Gastrocnemius medialis (tissue), 4 donors: ENCODE measurements at regions of chr1 and their contacts with region 1.

Region 1: DNA sequence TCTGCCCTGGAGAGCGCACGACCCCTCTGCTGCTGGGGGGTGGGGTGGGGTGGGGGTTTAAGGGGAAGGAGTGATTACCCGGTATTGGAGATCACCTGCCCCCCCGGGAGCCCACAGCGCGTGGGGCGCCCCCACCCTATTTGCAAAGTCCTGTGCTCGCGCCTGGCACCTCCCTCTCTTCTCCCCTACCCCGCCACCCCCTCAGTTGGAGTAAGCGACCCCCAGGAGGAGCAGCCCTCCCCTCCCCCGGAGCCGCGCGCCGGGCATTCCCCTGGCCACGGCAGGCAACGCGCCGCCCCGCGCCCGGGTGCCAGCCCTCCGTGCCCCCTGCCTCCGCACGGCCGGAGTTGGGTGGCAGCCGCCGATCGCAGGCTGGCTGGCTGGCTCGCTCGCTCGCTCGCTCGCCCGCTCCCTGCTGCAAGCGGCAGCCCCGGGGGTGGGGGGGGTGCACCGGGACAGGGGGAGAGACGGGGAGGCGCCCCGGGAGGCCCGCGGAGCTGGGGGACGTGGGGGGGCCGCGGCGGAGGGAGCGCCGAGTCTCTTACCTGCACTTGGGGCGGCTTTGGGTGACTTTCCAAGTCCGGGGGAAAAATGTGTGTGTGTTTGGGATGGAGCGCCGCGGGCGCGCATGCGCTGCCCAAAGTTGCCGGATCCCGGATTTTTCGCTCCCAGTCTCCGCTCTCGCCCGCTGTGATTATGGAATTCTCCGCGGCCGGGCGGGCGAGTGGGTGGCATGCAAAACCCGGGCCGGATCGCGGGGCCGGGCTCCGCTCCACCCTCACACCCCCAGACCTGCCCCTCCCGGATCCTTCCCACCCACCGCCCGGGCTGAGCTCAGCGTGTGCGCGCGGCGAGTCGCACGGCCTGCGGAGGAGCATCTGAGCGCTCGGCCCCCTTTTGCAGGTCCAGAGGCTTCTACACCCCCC is at the start of gene CASZ1:
- DNase-seq: peak; percentile 71 to 84
- ATAC-seq: peak; percentile 44 to 51
- H3K4me3 ChIP-seq: peak within 1 kb of the TSS; percentile 80 to 98 (median 90)
- H3K27ac ChIP-seq: peak within 1 kb of the TSS; percentile 98 to 100 (median 99)
- H3K4me1 ChIP-seq: peaks cover 17 to 18% of the 10 kb centered on the region in 2 donors
- H3K27me3 ChIP-seq: no peaks in the 10 kb centered on the region
- CTCF ChIP-seq: peak in 2 of 5 experiments; percentile 36 to 56
- POLR2A ChIP-seq: peak; percentile 85
- total RNA-seq, gene CASZ1: 19.1 to 121 (median 80.6) TPM

Region 2: DNA sequence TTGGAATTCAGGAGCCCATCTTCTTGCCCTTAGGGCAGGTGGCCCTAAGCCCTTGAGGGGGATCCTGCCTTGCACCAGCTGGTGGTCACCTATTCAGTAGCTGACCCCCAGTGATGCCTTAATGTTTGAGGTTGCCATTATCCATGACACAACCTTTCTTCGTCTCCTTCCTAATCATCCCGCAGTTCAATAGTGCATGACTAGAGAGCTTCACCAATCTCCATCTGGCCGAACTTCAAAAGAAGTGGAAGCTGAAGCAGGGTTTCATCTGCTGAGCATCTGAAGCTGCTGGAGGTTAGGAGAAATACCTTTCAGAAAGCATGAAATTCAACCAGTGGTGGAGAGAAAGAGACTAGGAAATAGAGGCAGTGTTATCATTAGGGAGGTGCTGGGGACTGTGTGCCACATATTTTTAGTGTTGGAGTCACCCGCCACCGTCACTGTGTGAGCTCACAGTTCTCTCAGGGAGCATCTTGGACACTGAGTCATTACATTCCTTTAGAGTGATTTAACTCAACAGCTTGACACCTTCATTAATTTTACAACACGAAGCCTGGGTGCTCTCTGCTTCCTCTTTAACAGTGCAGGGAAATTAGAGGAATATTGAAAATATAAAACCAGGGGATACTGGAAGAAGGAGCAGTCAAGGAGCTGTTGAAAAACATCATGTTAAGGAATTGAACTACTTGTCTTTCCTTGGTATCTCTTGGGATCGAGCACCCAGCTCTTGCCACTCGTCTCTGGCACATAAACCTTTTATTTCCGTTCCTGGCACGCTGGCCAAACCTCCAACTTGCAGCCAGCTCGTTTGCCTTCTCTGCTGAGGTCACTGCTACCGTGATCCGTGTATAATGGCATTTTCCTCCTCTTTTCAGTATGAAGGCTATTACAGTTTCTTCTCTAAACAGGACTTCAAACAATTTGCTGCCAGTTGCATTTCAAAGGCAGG is 267.9 kb before region 1 on chr1:
- in situ Hi-C with region 1: no loop called
- intact Hi-C with region 1: loop called (anchors 5 kb)
- DNase-seq: peak; percentile 50 to 70
- ATAC-seq: peak; percentile 97 to 98
- H3K4me3 ChIP-seq: peak overlapping the region in 1 of 4 donors; percentile 4
- H3K27ac ChIP-seq: peak overlapping the region; percentile 14 to 75 (median 66)
- H3K4me1 ChIP-seq: peaks cover 24 to 38% of the 10 kb centered on the region in 2 donors
- H3K27me3 ChIP-seq: no peaks in the 10 kb centered on the region
- CTCF ChIP-seq: no peak
- POLR2A ChIP-seq: no peak

Region 3: GRCh38 chr1:10679496-10680220 is 116.6 kb before region 1 on chr1:
- in situ Hi-C with region 1: loop called in 3 of 4 experiments (anchors 10 to 25 kb)
- intact Hi-C with region 1: no loop called
- DNase-seq: no peak
- ATAC-seq: no peak
- H3K4me3 ChIP-seq: no peak overlapping the region
- H3K27ac ChIP-seq: peak overlapping the region in 3 of 4 donors; percentile 22 to 81 (median 37)
- H3K4me1 ChIP-seq: peaks cover 78 to 81% of the 10 kb centered on the region in 2 donors
- H3K27me3 ChIP-seq: no peaks in the 10 kb centered on the region
- CTCF ChIP-seq: no peak
- POLR2A ChIP-seq: no peak

Region 4: GRCh38 chr1:10724948-10725847 is 71.1 kb before region 1 on chr1:
- in situ Hi-C with region 1: no loop called
- intact Hi-C with region 1: loop called (anchors 2 kb)
- DNase-seq: peak; percentile 88 to 96
- ATAC-seq: peak; percentile 40 to 43
- H3K4me3 ChIP-seq: peak overlapping the region in 1 of 4 donors; percentile 3
- H3K27ac ChIP-seq: peak overlapping the region; percentile 93 to 100 (median 98)
- H3K4me1 ChIP-seq: peaks cover 59 to 81% of the 10 kb centered on the region in 2 donors
- H3K27me3 ChIP-seq: no peaks in the 10 kb centered on the region
- CTCF ChIP-seq: no peak
- POLR2A ChIP-seq: peak; percentile 24 to 25

Region 5: GRCh38 chr1:10856863-10857598 is 60.7 kb after region 1 on chr1:
- in situ Hi-C with region 1: loop called in 1 of 4 experiments (anchors 10 kb)
- intact Hi-C with region 1: loop called (anchors 1 kb)
- DNase-seq: peak; percentile 50 to 72
- ATAC-seq: peak; percentile 54 to 64
- H3K4me3 ChIP-seq: peak overlapping the region; percentile 2 to 35 (median 16)
- H3K27ac ChIP-seq: peak overlapping the region; percentile 91 to 99 (median 93)
- H3K4me1 ChIP-seq: peaks cover 55 to 57% of the 10 kb centered on the region in 2 donors
- H3K27me3 ChIP-seq: no peaks in the 10 kb centered on the region
- CTCF ChIP-seq: no peak
- POLR2A ChIP-seq: peak; percentile 45 to 49

Region 6: DNA sequence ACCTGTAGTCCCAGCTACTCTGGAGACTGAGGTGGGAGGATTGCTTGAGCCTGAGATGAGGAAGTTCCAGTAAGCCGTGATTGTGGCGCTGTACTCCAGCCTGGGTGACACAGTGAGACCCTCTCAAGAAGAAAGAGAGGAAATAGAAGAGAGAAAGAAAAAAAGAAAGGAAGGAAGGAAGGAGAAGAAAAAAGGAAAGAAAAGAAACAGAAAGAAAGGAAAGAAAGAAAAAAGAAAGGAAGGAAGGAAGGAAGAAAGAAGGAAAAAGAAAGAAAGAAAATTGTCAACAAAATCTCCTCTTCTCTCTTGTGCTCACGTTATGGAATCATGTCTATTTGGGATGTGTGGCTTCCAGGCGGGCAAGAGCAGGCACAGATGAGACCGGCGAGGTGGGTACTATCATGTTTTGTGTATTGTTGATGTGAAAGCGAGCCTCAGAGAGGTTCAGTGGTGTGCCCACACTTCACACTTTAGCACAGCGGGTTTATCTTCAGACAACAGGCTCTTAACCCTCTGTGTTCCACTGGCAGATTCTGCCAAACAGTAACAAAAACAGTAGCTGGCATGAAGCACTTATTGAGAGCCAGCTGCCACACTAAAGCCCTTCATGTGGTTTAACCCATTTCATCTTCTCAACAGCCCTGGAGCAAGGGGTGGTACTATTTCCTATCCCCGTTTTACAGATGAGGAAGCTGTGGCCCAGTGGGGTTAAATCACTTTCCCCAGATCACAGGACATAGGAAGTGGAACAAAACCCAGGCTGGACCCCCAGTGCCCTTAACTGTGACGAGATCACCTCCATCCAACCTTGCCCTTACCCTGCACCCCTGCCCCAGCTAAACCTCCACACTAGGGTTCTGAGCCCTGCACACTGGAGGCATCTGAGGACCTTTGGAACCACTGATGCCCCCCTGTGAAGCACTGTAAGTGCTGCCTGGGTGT is 121.5 kb after region 1 on chr1:
- in situ Hi-C with region 1: no loop called
- intact Hi-C with region 1: no loop called
- DNase-seq: no peak
- ATAC-seq: no peak
- H3K4me3 ChIP-seq: no peak overlapping the region
- H3K27ac ChIP-seq: no peak overlapping the region
- H3K4me1 ChIP-seq: no peaks in the 10 kb centered on the region
- H3K27me3 ChIP-seq: peaks cover 0 to 13% (median 4%) of the 10 kb centered on the region in 3 donors
- CTCF ChIP-seq: no peak
- POLR2A ChIP-seq: no peak